T-cell (primary cell): ENCODE measurements at regions of chr22 and their contacts with region 1.

Region 1: GRCh38 chr22:40436505-40437451 is 66.4 kb downstream of the SGSM3 start:
- DNase-seq: peak in 9 of 35 experiments; percentile 5 to 81 (median 24)
- ATAC-seq: peak; percentile 59 to 76 (median 64)
- H3K4me3 ChIP-seq: peak overlapping the region in 1 of 2 donors; percentile 27
- H3K4me3 Mint-ChIP-seq: peak overlapping the region in 1 of 3 donors; percentile 48
- H3K27ac ChIP-seq: peak overlapping the region; percentile 28
- H3K27ac Mint-ChIP-seq: peak overlapping the region; percentile 65 to 82
- H3K4me1 ChIP-seq: peaks cover 7 to 28% of the 10 kb centered on the region in 2 experiments
- H3K4me1 Mint-ChIP-seq: peaks cover 37 to 73% (median 61%) of the 10 kb centered on the region in 3 donors
- H3K27me3 ChIP-seq: no peaks in the 10 kb centered on the region
- H3K27me3 Mint-ChIP-seq: no peaks in the 10 kb centered on the region

Region 2: DNA sequence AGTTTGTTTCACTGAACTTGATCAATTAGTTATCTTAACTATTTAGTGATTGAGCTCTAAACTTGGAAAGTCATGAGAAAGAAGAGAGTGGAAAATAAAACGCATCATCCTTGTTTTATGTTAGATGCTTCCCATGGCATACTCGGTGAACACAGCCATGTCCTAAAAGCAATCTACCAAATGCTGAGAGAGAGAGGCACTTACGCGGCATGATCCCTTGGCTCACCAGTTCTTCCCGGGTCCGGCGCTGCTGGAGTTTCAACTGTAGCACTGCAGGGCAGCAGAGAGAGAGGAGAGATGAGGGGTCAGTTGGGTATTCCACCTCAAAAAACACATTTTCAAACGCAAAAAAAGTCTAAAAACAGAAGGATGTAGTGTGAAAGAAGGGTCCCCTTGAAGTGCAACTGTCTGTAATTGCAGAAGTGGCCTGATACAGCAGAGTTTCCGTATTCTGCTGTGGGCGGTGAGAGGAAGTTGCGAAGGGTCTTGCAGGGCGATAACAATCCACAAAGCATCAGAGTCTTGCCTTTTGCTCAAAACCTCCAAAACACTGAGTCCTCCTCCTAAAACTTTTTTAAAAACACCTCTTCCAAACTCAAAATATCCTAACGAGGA is 26.3 kb after region 1 on chr22:
- CTCF ChIA-PET with region 1: interaction called, 8 to 17 read pairs
- POLR2A ChIA-PET with region 1: interaction called in 1 of 2 experiments, 4 read pairs
- DNase-seq: peak in 34 of 35 experiments; percentile 7 to 69 (median 35)
- ATAC-seq: peak; percentile 86 to 90 (median 89)
- H3K4me3 ChIP-seq: peak overlapping the region; percentile 71 to 94
- H3K4me3 Mint-ChIP-seq: peak overlapping the region; percentile 92 to 99 (median 99)
- H3K27ac ChIP-seq: peak overlapping the region; percentile 59
- H3K27ac Mint-ChIP-seq: peak overlapping the region; percentile 98 to 100
- H3K4me1 ChIP-seq: peaks cover 26 to 44% of the 10 kb centered on the region in 2 experiments
- H3K4me1 Mint-ChIP-seq: peaks cover 76 to 79% (median 79%) of the 10 kb centered on the region in 3 donors
- H3K27me3 ChIP-seq: no peaks in the 10 kb centered on the region
- H3K27me3 Mint-ChIP-seq: no peaks in the 10 kb centered on the region

Region 3: GRCh38 chr22:40487663-40488249 is 51.0 kb after region 1 on chr22:
- CTCF ChIA-PET with region 1: interaction called, 16 to 46 read pairs
- POLR2A ChIA-PET with region 1: no interaction called
- DNase-seq: peak in 1 of 35 experiments; percentile 63
- ATAC-seq: peak; percentile 56 to 69 (median 64)
- H3K4me3 ChIP-seq: no peak overlapping the region
- H3K4me3 Mint-ChIP-seq: no peak overlapping the region
- H3K27ac ChIP-seq: no peak overlapping the region
- H3K27ac Mint-ChIP-seq: peak overlapping the region in 1 of 2 donors; percentile 2
- H3K4me1 ChIP-seq: peaks cover 15 to 21% of the 10 kb centered on the region in 2 experiments
- H3K4me1 Mint-ChIP-seq: peaks cover 41 to 46% (median 43%) of the 10 kb centered on the region in 3 donors
- H3K27me3 ChIP-seq: no peaks in the 10 kb centered on the region
- H3K27me3 Mint-ChIP-seq: no peaks in the 10 kb centered on the region

Region 4: DNA sequence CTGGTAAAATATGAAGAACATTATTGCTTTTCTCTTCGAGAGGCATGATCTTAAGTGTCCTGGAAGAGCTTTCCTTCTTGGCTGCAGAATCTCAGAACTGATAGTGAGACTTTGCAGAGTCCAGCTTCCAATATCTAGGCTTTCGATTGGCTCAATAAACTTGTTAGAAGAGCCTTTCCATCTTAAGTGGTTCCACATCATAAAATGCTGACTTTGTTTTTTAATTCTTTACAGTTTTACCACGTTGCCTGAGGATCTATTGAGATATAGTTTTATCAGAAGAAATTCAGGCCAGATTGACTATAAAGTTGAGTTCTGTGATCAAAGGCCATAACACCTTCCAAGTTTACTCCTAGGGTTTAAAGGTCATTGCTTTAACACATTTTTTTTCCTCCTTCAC is 440.7 kb after region 1 on chr22:
- CTCF ChIA-PET with region 1: no interaction called
- POLR2A ChIA-PET with region 1: interaction called in 1 of 2 experiments, 11 read pairs
- DNase-seq: no peak
- ATAC-seq: no peak
- H3K4me3 ChIP-seq: no peak overlapping the region
- H3K4me3 Mint-ChIP-seq: no peak overlapping the region
- H3K27ac ChIP-seq: no peak overlapping the region
- H3K27ac Mint-ChIP-seq: no peak overlapping the region
- H3K4me1 ChIP-seq: no peaks in the 10 kb centered on the region
- H3K4me1 Mint-ChIP-seq: no peaks in the 10 kb centered on the region
- H3K27me3 ChIP-seq: no peaks in the 10 kb centered on the region
- H3K27me3 Mint-ChIP-seq: no peaks in the 10 kb centered on the region